B cell (primary cell): ENCODE measurements at regions of chr6 and their contacts with region 1.

Region 1: GRCh38 chr6:110664933-110665332 is 150.3 kb downstream of the CDK19 start:
- DNase-seq: peak; percentile 58
- ATAC-seq: peak; percentile 68
- H3K4me3 ChIP-seq: no peak overlapping the region
- H3K4me3 Mint-ChIP-seq: peak overlapping the region; percentile 5
- H3K27ac ChIP-seq: peak overlapping the region; percentile 51 to 66
- H3K27ac Mint-ChIP-seq: peak overlapping the region; percentile 66
- H3K4me1 ChIP-seq: peaks cover 17 to 21% of the 10 kb centered on the region in 2 donors
- H3K4me1 Mint-ChIP-seq: peaks cover 18% of the 10 kb centered on the region
- H3K27me3 ChIP-seq: no peaks in the 10 kb centered on the region
- H3K27me3 Mint-ChIP-seq: no peaks in the 10 kb centered on the region
- CTCF ChIP-seq: no peak

Region 2: DNA sequence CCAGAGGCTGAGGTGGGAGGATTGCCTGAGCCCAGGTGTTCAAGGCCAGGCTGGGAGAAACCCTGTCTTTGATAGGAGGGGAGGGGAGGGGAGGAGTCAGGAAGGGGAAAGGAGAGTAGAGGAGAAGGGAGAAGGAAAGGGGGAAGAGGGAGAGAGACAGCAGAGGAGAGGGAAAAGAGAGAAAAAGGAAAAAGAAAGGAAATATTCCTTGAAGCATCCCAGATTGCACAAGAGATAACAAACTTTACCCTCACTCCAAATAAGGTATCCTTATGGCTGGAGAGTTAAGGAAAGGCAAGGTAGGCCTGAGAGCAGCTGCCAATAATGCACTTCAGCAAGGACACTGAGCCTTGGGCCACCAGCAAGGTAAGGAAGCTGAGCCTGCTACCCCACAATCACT is 22.2 kb before region 1 on chr6:
- CTCF ChIA-PET with region 1: no interaction called
- POLR2A ChIA-PET with region 1: interaction called, 12 read pairs
- intact Hi-C with region 1: no loop called
- DNase-seq: no peak
- ATAC-seq: no peak
- H3K4me3 ChIP-seq: no peak overlapping the region
- H3K4me3 Mint-ChIP-seq: no peak overlapping the region
- H3K27ac ChIP-seq: no peak overlapping the region
- H3K27ac Mint-ChIP-seq: no peak overlapping the region
- H3K4me1 ChIP-seq: no peaks in the 10 kb centered on the region
- H3K4me1 Mint-ChIP-seq: no peaks in the 10 kb centered on the region
- H3K27me3 ChIP-seq: no peaks in the 10 kb centered on the region
- H3K27me3 Mint-ChIP-seq: no peaks in the 10 kb centered on the region
- CTCF ChIP-seq: no peak